A549 (cell line): ENCODE measurements at regions of chr1 and their contacts with region 1.

Region 1: DNA sequence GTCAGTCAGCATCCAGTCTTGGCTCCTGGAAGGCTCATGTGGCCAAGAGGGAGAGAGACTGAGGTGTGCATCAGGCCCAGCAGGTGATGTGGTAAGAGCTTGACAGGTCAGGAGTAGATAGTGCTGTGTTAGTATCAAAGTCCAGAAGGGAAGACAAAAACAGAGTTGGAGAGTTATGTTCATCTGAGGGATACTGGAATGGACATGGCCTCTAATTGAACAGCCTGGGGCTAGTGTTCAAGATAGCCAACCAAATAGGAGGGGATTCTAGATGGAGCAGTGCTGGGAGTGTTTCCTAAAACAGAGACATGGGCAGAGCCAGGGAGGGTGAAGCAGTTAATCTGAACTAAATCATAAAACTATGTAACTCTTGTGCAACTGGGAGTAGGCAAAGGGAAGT is 120.7 kb upstream of the MARK1 start:
- DNase-seq: no peak
- ATAC-seq: 0 out of 6 replicates have a peak, but pooled peaks of 1 of the 2 experiments have one; percentile 13
- H3K4me3 ChIP-seq: no peak overlapping the region
- H3K27ac ChIP-seq: no peak overlapping the region
- H3K4me1 ChIP-seq: no peaks in the 10 kb centered on the region
- CTCF ChIP-seq: no peak
- EP300 ChIP-seq: no peak
- POLR2A ChIP-seq: no peak
- RAD21 ChIP-seq: no peak

Region 2: DNA sequence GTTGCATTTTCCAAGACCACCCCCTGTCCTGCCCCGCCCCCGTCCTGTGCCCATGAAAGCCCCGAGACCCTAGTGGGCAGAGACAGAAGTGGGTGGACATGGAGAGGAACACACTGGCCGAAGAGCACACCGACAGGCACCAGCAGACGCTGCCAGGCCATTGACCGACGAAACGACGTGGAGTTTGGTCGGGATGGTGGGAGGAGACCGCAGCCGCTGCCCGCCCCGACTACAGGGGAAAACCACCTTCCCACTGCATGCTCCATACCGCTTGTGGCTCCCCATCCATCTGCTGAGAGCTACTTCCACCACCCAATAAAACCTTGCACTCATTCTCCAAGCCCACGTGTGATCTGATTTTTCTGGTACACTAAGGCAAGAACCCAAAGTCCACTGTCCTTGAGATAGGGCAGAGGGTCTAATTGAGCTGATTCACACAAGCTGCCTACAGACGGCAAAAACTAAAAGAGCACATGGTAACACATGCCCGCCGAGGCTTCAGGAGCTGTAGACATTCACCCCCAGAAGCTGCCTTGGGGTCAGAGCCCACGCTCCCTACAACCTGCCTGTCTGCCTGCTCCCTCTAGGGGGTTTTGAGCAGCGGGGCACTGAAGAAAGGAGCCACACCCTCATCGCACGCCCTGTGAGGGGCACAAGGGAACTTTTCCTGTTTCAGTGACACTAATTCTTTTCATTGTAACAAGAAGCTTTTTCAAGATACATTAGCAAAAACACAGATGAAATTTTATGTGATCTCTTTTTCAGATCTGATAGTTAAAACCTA is 53.8 kb before region 1 on chr1:
- CTCF ChIA-PET with region 1: no interaction called
- POLR2A ChIA-PET with region 1: interaction called, 13 read pairs
- DNase-seq: no peak
- ATAC-seq: peak; percentile 75 to 80; a peak in 5 of 6 replicates
- H3K4me3 ChIP-seq: no peak overlapping the region
- H3K27ac ChIP-seq: no peak overlapping the region
- H3K4me1 ChIP-seq: no peaks in the 10 kb centered on the region
- CTCF ChIP-seq: no peak
- EP300 ChIP-seq: no peak
- POLR2A ChIP-seq: no peak
- RAD21 ChIP-seq: no peak